ENCODE measurements at regions of chr9 and their contacts with region 1.

Region 1: DNA sequence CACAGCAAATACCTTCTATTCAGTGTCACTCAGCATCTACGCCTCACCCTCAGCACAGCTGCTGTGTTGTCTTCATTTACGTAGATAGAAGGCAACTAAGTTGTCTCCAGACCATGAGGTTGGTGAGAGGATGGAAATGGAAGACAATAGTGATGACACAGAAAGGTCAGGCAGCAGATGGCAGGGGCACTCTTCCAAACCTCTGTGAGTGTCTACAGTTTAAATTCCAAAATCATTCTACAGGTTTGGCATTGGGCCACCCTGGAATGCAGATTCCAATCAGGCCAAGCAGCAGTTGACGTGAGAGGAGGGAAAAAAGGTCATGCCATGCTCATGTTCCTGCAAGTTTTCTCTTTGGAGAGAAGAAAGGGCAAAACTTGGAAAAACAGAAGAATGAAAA is 68.7 kb upstream of the ADAMTSL1 start:
- DNase-seq: peak; percentile 57
- H3K4me3 ChIP-seq: no peak overlapping the region
- H3K27ac ChIP-seq: no peak overlapping the region
- H3K4me1 ChIP-seq: peaks cover 13% of the 10 kb centered on the region
- H3K27me3 ChIP-seq: no peaks in the 10 kb centered on the region
- CTCF ChIP-seq: peak; percentile 4 to 38

Region 2: GRCh38 chr9:18626046-18626698 is 220.9 kb after region 1 on chr9:
- CTCF ChIA-PET with region 1: no interaction called
- dilution Hi-C with region 1: no loop called
- in situ Hi-C with region 1: no loop called
- intact Hi-C with region 1: loop called (anchors 1 kb)
- DNase-seq: peak; percentile 23
- H3K4me3 ChIP-seq: no peak overlapping the region
- H3K27ac ChIP-seq: no peak overlapping the region
- H3K4me1 ChIP-seq: no peaks in the 10 kb centered on the region
- H3K27me3 ChIP-seq: no peaks in the 10 kb centered on the region
- CTCF ChIP-seq: peak; percentile 41

Region 3: DNA sequence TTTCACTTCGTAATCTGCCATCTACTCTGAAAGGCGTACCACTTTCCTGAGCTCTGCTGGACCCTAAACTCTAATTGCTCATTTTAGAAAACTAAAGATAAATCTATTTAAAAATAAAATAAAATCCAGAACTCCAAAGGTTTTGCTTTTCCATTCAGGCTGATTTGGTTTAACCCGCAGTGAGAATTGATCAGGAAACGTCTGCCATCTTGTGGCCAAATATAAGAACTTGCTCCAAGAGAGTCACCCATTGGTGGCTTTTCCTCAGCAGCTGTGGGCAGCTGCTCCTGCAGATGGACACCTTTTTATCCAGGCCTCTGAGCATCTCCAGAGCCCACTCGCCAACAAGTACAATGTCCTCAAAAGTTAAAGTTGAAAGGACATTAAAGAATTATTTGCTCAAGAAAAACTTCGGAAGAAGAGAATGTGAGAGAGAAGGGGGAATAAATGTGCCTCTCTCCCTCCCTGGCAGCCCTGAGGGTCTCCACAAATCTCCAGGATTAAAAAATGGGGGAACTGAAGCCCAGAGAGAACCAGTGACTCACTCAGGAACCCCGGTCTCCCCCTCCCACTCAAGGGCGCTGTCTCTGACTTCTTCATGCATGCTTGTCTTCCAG is 623.7 kb after region 1 on chr9:
- CTCF ChIA-PET with region 1: no interaction called
- dilution Hi-C with region 1: no loop called
- in situ Hi-C with region 1: no loop called
- intact Hi-C with region 1: loop called (anchors 2 kb)
- DNase-seq: peak; percentile 40
- H3K4me3 ChIP-seq: no peak overlapping the region
- H3K27ac ChIP-seq: no peak overlapping the region
- H3K4me1 ChIP-seq: no peaks in the 10 kb centered on the region
- H3K27me3 ChIP-seq: no peaks in the 10 kb centered on the region
- CTCF ChIP-seq: peak; percentile 58 to 72